ENCODE measurements at regions of chr4 and their contacts with region 1.

Region 1: DNA sequence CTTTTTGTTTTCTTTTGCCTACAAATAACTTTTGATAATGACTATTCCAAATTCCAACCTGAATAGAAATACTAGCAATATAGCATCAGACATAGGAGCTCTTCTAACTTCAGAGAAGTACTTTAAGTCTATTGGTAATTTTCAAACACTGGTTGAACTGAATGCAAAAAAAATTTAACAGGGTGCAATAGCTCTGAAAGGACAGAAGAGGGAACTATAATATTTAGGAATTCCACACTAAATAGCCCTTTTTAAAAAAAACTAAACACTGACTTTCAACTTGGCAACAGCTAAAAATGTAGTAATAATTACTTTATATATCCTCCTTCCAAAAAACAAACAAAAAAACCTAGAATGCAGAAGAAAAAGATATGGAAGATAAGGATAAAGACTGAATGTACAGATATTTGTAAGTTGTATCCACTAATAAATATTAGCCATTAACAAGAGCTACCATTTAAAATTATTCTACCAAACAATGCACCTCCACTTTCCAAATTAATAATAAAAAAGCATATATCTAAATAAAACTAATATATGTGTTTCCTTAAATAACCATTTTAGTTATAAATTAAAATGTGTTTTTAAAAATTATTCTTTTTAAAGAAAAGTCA is 81.4 kb downstream of the FBXW7 start:
- DNase-seq: peak; percentile 53
- ATAC-seq: no peak
- H3K4me3 ChIP-seq: no peak overlapping the region
- H3K27ac ChIP-seq: no peak overlapping the region
- H3K4me1 ChIP-seq: peaks cover 18% of the 10 kb centered on the region
- H3K27me3 ChIP-seq: no peaks in the 10 kb centered on the region
- CTCF ChIP-seq: peak; percentile 78

Region 2: GRCh38 chr4:152500800-152501434 is 46.4 kb after region 1 on chr4:
- CTCF ChIA-PET with region 1: no interaction called
- POLR2A ChIA-PET with region 1: no interaction called
- intact Hi-C with region 1: loop called (anchors 5 kb)
- DNase-seq: peak; percentile 90
- ATAC-seq: peak; percentile 73; the same call in 1 of the 2 replicates
- H3K4me3 ChIP-seq: no peak overlapping the region
- H3K27ac ChIP-seq: no peak overlapping the region
- H3K4me1 ChIP-seq: no peaks in the 10 kb centered on the region
- H3K27me3 ChIP-seq: no peaks in the 10 kb centered on the region
- CTCF ChIP-seq: peak; percentile 84